Naive thymus-derived CD4-positive, alpha-beta T cell (primary cell): ENCODE measurements at regions of chr9 and their contacts with region 1.

Region 1: DNA sequence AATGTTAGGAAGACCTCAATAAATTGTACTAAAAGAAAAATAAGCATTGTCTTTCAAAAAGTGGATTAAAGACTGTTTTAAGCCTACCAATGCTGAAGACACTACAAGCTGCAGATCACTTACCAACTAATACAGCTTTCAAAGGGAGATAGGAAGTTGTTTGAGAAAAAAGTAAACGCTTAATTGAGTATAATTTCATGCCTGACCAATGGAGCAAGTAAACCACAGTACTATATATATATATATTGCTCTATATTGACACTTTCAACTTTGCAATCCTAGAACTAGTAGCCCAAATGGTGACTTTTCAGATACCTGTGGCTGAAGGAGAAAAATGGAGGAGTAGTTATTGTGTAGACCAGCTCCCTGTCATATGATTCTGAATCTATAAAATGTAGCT is 85.7 kb downstream of the FREM1 start:
- DNase-seq: no peak
- ATAC-seq: no peak
- H3K4me3 ChIP-seq: no peak overlapping the region
- H3K4me3 Mint-ChIP-seq: no peak overlapping the region
- H3K27ac ChIP-seq: no peak overlapping the region
- H3K27ac Mint-ChIP-seq: no peak overlapping the region
- H3K4me1 ChIP-seq: no peaks in the 10 kb centered on the region
- H3K4me1 Mint-ChIP-seq: no peaks in the 10 kb centered on the region
- H3K27me3 ChIP-seq: no peaks in the 10 kb centered on the region
- H3K27me3 Mint-ChIP-seq: peaks cover 0 to 22% (median 10%) of the 10 kb centered on the region in 5 donors

Region 2: GRCh38 chr9:14030375-14031059 is 794.0 kb before region 1 on chr9:
- CTCF ChIA-PET with region 1: no interaction called
- POLR2A ChIA-PET with region 1: no interaction called
- intact Hi-C with region 1: no loop called
- DNase-seq: no peak
- ATAC-seq: no peak
- H3K4me3 ChIP-seq: no peak overlapping the region
- H3K4me3 Mint-ChIP-seq: no peak overlapping the region
- H3K27ac ChIP-seq: no peak overlapping the region
- H3K27ac Mint-ChIP-seq: no peak overlapping the region
- H3K4me1 ChIP-seq: no peaks in the 10 kb centered on the region
- H3K4me1 Mint-ChIP-seq: no peaks in the 10 kb centered on the region
- H3K27me3 ChIP-seq: no peaks in the 10 kb centered on the region
- H3K27me3 Mint-ChIP-seq: no peaks in the 10 kb centered on the region

Region 3: GRCh38 chr9:14749741-14750211 is 74.7 kb before region 1 on chr9:
- CTCF ChIA-PET with region 1: no interaction called
- POLR2A ChIA-PET with region 1: no interaction called
- intact Hi-C with region 1: loop called in 1 of 2 experiments (anchors 2 kb)
- DNase-seq: peak in 7 of 9 donors; percentile 16 to 55 (median 33)
- ATAC-seq: peak; percentile 75
- H3K4me3 ChIP-seq: no peak overlapping the region
- H3K4me3 Mint-ChIP-seq: peak overlapping the region in 9 of 10 donors; percentile 2 to 55 (median 30)
- H3K27ac ChIP-seq: no peak overlapping the region
- H3K27ac Mint-ChIP-seq: peak overlapping the region in 2 of 9 donors; percentile 21 to 41
- H3K4me1 ChIP-seq: peaks cover 0 to 4% of the 10 kb centered on the region in 2 donors
- H3K4me1 Mint-ChIP-seq: peaks cover 3 to 25% (median 21%) of the 10 kb centered on the region in 7 donors
- H3K27me3 ChIP-seq: no peaks in the 10 kb centered on the region
- H3K27me3 Mint-ChIP-seq: peaks cover 23 to 48% (median 27%) of the 10 kb centered on the region in 5 donors

Region 4: DNA sequence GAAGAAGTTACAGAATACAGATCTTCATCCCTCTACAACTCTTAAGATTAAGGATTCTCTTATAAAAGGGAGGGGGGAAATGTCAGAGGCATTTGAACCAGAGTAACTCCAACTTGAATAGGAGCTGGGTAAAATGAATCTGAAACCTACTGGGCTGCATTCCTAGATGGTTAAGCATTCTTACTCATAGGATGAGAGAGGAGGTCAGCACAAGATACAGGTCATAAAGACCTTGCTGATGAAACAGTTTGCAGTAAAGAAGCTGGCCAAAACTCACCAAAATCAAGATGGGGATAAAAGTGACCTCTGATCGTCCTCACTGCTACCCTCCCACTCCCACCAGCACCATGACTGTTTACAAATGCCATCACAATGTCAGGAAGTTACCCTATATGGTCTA is 71.4 kb after region 1 on chr9:
- CTCF ChIA-PET with region 1: no interaction called
- POLR2A ChIA-PET with region 1: no interaction called
- intact Hi-C with region 1: no loop called
- DNase-seq: no peak
- ATAC-seq: no peak
- H3K4me3 ChIP-seq: no peak overlapping the region
- H3K4me3 Mint-ChIP-seq: no peak overlapping the region
- H3K27ac ChIP-seq: no peak overlapping the region
- H3K27ac Mint-ChIP-seq: no peak overlapping the region
- H3K4me1 ChIP-seq: no peaks in the 10 kb centered on the region
- H3K4me1 Mint-ChIP-seq: no peaks in the 10 kb centered on the region
- H3K27me3 ChIP-seq: no peaks in the 10 kb centered on the region
- H3K27me3 Mint-ChIP-seq: no peaks in the 10 kb centered on the region